ENCODE measurements at regions of chr17 and their contacts with region 1.

Region 1: DNA sequence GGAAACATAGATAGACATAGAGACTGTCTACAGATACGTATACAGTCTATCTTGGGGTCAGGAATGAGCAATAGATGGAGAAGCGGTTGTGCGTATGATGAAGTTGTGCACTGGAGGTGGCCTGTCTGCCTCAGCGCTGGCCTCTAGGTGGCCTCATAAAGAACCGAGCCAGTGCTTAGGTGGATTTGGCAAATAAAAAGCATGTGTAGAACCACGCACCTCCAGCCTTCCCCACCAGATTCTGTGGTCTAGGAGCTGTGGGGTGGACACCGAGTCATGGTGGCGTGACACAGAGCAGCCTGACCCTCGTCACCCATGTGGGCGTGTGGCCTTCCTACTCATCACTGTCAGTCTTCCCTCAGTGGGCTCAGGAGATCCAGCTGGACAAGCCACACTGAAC is 34.0 kb downstream of the PGS1 start:
- DNase-seq: no peak
- ATAC-seq: peak; percentile 25; the same call in 1 of the 2 replicates
- H3K4me3 Mint-ChIP-seq: no peak overlapping the region
- H3K27ac Mint-ChIP-seq: peak overlapping the region; percentile 27; the same call in 1 of the 2 replicates
- H3K4me1 Mint-ChIP-seq: peaks cover 13% of the 10 kb centered on the region
- H3K27me3 Mint-ChIP-seq: no peaks in the 10 kb centered on the region
- CTCF ChIP-seq: no peak

Region 2: GRCh38 chr17:77948690-77949114 is 463.7 kb before region 1 on chr17:
- CTCF ChIA-PET with region 1: no interaction called
- POLR2A ChIA-PET with region 1: no interaction called
- DNase-seq: no peak
- ATAC-seq: peak; percentile 96
- H3K4me3 Mint-ChIP-seq: peak overlapping the region; percentile 60
- H3K27ac Mint-ChIP-seq: peak overlapping the region; percentile 58; the same call in 1 of the 2 replicates
- H3K4me1 Mint-ChIP-seq: peaks cover 21% of the 10 kb centered on the region
- H3K27me3 Mint-ChIP-seq: peaks cover 18% of the 10 kb centered on the region
- CTCF ChIP-seq: no peak

Region 3: GRCh38 chr17:78450696-78451345 is 38.4 kb after region 1 on chr17:
- CTCF ChIA-PET with region 1: interaction called, 3 read pairs
- POLR2A ChIA-PET with region 1: interaction called, 10 read pairs
- DNase-seq: no peak
- ATAC-seq: peak; percentile 60
- H3K4me3 Mint-ChIP-seq: no peak overlapping the region
- H3K27ac Mint-ChIP-seq: peak overlapping the region; percentile 16; the same call in 1 of the 2 replicates
- H3K4me1 Mint-ChIP-seq: no peaks in the 10 kb centered on the region
- H3K27me3 Mint-ChIP-seq: no peaks in the 10 kb centered on the region
- CTCF ChIP-seq: no peak

Measured in WTC11 (cell line).